Activated B cell treated with CpG ODN at 0.5 μM for 24 hours (primary cell): ENCODE measurements at regions of chr3 and their contacts with region 1.

Region 1: GRCh38 chr3:143972505-143973255 is 1.1 kb downstream of the DIPK2A start:
- DNase-seq: peak; percentile 74
- ATAC-seq: peak; percentile 15
- H3K4me3 Mint-ChIP-seq: peak overlapping the region; percentile 99
- H3K27ac Mint-ChIP-seq: peak overlapping the region; percentile 99
- H3K4me1 Mint-ChIP-seq: peaks cover 48% of the 10 kb centered on the region
- H3K27me3 Mint-ChIP-seq: no peaks in the 10 kb centered on the region
- CTCF ChIP-seq: no peak

Region 2: GRCh38 chr3:142578327-142579223 is 1394.1 kb before region 1 on chr3 and contains the start of gene ATR:
- CTCF ChIA-PET with region 1: no interaction called
- POLR2A ChIA-PET with region 1: interaction called, 13 read pairs
- intact Hi-C with region 1: loop called (anchors 5 kb)
- DNase-seq: peak; percentile 92
- ATAC-seq: peak; percentile 95
- H3K4me3 Mint-ChIP-seq: peak within 1 kb of the TSS; percentile 96
- H3K27ac Mint-ChIP-seq: peak within 1 kb of the TSS; percentile 97
- H3K4me1 Mint-ChIP-seq: peaks cover 48% of the 10 kb centered on the region
- H3K27me3 Mint-ChIP-seq: peaks cover 5% of the 10 kb centered on the region
- CTCF ChIP-seq: no peak
- total RNA-seq, gene ATR: 47.4 and 47.6 TPM in 2 replicates

Region 3: DNA sequence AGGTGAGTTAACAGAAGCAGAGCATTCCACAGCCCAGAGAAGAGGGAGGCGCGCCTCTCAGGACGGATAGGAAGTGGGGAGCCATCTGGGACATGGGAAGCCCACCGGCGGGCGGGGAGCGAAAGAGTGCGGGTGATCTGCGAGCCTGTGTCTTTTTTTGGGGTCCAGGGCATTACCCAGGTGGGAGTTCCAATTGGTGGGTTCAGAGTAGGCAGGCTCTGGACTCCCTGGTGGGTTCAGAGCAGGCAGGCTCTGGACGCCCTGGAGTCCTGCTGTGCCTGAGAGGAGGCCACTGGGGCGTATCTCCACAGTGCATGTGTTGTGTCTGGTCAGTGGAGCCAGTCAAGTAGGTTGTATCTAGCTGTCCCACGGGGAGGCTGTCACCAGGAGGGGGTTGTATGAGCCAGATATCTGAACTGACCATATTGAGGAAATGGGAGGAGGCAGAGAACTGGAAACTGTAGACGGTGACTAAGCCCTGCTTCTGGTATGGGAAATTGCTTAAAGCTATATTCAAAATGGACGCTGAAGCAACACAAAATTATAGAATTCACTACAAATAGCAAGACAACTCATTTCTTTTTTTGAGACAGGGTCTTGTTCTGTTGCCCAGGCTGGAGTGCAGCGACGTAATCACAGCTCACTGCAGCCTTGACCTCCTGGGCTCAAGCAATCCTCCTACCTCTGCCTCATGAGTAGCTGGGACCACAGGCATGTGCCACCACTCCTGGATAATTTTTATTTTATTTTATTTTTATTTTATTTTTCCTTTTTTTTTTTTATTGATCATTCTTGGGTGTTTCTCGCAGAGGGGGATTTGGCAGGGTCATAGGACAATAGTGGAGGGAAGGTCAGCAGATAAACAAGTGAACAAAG is 887.6 kb before region 1 on chr3:
- CTCF ChIA-PET with region 1: no interaction called
- POLR2A ChIA-PET with region 1: interaction called, 7 read pairs
- intact Hi-C with region 1: loop called (anchors 1 kb)
- DNase-seq: peak; percentile 19
- ATAC-seq: peak; percentile 53
- H3K4me3 Mint-ChIP-seq: no peak overlapping the region
- H3K27ac Mint-ChIP-seq: peak overlapping the region; percentile 14
- H3K4me1 Mint-ChIP-seq: peaks cover 31% of the 10 kb centered on the region
- H3K27me3 Mint-ChIP-seq: no peaks in the 10 kb centered on the region
- CTCF ChIP-seq: no peak

Region 4: GRCh38 chr3:143775459-143775858 is 197.2 kb before region 1 on chr3:
- CTCF ChIA-PET with region 1: no interaction called
- POLR2A ChIA-PET with region 1: interaction called, 6 read pairs
- intact Hi-C with region 1: loop called (anchors 1 kb)
- DNase-seq: no peak
- ATAC-seq: peak; percentile 70
- H3K4me3 Mint-ChIP-seq: no peak overlapping the region
- H3K27ac Mint-ChIP-seq: no peak overlapping the region
- H3K4me1 Mint-ChIP-seq: peaks cover 3% of the 10 kb centered on the region
- H3K27me3 Mint-ChIP-seq: no peaks in the 10 kb centered on the region
- CTCF ChIP-seq: no peak

Region 5: GRCh38 chr3:143924522-143925285 is 48.0 kb before region 1 on chr3:
- CTCF ChIA-PET with region 1: interaction called, 9 read pairs
- POLR2A ChIA-PET with region 1: interaction called, 107 read pairs
- intact Hi-C with region 1: loop called (anchors 1 kb)
- DNase-seq: no peak
- ATAC-seq: peak; percentile 69
- H3K4me3 Mint-ChIP-seq: peak overlapping the region; percentile 75
- H3K27ac Mint-ChIP-seq: peak overlapping the region; percentile 91
- H3K4me1 Mint-ChIP-seq: peaks cover 84% of the 10 kb centered on the region
- H3K27me3 Mint-ChIP-seq: no peaks in the 10 kb centered on the region
- CTCF ChIP-seq: no peak

Region 6: DNA sequence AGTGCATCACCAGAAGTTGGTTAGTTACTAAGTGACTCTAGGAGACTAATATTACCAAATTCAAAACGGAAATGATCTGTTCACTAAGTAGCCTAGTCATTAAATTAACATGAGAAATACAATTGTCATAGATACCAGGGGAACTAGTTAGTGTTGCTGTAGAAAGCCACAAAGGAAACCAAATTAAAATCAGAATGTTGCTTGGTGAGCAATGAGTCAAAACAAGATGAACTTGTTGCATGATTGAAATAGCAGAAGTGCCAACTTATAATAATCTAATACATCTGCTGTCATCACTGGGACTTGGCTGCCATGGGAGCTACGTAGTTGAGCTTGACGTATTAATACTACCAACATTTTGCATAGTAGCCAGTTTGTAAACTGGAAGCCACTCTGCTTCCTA is 457.0 kb after region 1 on chr3:
- CTCF ChIA-PET with region 1: no interaction called
- POLR2A ChIA-PET with region 1: no interaction called
- intact Hi-C with region 1: loop called (anchors 10 kb)
- DNase-seq: no peak
- ATAC-seq: peak; percentile 14
- H3K4me3 Mint-ChIP-seq: no peak overlapping the region
- H3K27ac Mint-ChIP-seq: no peak overlapping the region
- H3K4me1 Mint-ChIP-seq: no peaks in the 10 kb centered on the region
- H3K27me3 Mint-ChIP-seq: no peaks in the 10 kb centered on the region
- CTCF ChIP-seq: no peak

Region 7: DNA sequence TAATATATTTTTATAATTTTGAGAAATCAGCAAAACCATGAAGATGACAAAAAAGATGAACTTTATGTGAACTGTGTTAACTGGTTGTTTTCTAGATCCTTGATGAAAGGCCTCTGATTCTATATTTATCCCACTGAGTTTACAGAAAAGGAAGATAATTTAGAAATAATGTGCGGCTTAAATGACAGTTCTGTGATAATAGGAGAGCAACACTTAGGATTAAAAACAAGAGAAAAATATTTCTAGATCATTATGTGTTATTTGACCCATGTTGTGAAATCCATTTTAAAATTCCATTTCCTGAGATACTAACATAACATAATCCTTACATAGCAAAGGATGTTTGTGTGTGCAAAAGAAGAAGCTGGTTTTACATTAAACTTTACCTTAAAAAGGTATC is 597.0 kb after region 1 on chr3:
- CTCF ChIA-PET with region 1: no interaction called
- POLR2A ChIA-PET with region 1: no interaction called
- intact Hi-C with region 1: no loop called
- DNase-seq: no peak
- ATAC-seq: no peak
- H3K4me3 Mint-ChIP-seq: no peak overlapping the region
- H3K27ac Mint-ChIP-seq: no peak overlapping the region
- H3K4me1 Mint-ChIP-seq: no peaks in the 10 kb centered on the region
- H3K27me3 Mint-ChIP-seq: no peaks in the 10 kb centered on the region
- CTCF ChIP-seq: no peak